Activated T-helper 2 cell treated with anti-CD3 and anti-CD28 coated beads, Interferon-gamma antibody, Interleukin-2, Interleukin-4, amounts not matched to agents 10 μg/mL and 5 μg/mL and 100 μg/mL, durations not matched to agents 14 hours and 24 hours and 36 hours (primary cell): ENCODE measurements at regions of chr13 and their contacts with region 1.

Region 1: DNA sequence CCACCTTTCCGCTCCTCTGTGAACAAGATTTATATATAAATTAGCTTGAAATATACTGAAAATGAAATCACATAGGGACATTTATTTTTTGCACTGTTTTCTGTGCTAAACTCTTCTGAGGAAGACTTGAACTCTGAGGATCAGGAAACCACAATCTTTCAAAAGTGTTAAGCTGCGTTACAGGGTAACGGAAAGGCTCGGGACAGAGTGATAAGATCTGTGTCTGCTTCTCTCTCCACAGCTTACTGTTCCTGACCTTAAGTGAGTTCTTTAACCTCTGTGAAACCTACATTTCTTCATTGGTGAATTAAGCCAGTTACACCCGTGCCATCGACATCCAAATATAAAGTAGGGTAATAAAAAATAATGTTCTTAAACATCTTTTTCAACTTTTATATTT is 38.9 kb downstream of the DACH1 start:
- DNase-seq: no peak
- H3K4me3 Mint-ChIP-seq: no peak overlapping the region
- H3K27ac Mint-ChIP-seq: no peak overlapping the region
- H3K4me1 Mint-ChIP-seq: peaks cover 22% of the 10 kb centered on the region
- H3K27me3 Mint-ChIP-seq: peaks cover 5% of the 10 kb centered on the region

Region 2: GRCh38 chr13:71867131-71867814 is 39.2 kb after region 1 on chr13 and contains the start of gene DACH1:
- intact Hi-C with region 1: loop called (anchors 5 kb)
- DNase-seq: no peak
- H3K4me3 Mint-ChIP-seq: peak within 1 kb of the TSS; percentile 76
- H3K27ac Mint-ChIP-seq: no peak within 1 kb of the TSS
- H3K4me1 Mint-ChIP-seq: peaks cover 21% of the 10 kb centered on the region
- H3K27me3 Mint-ChIP-seq: peaks cover 84% of the 10 kb centered on the region
- total RNA-seq, gene DACH1: not detected in 2 replicates